ENCODE measurements at regions of chr13 and their contacts with region 1.

Region 1: GRCh38 chr13:110455941-110456340 is 105.6 kb downstream of the RAB20 start:
- DNase-seq: peak; percentile 84
- H3K4me3 Mint-ChIP-seq: peak overlapping the region; percentile 52
- H3K27ac Mint-ChIP-seq: no peak overlapping the region
- H3K4me1 Mint-ChIP-seq: peaks cover 4% of the 10 kb centered on the region
- H3K27me3 Mint-ChIP-seq: peaks cover 20% of the 10 kb centered on the region

Region 2: GRCh38 chr13:110250258-110250891 is 205.6 kb before region 1 on chr13:
- CTCF ChIA-PET with region 1: no interaction called
- intact Hi-C with region 1: no loop called
- DNase-seq: no peak
- H3K4me3 Mint-ChIP-seq: no peak overlapping the region
- H3K27ac Mint-ChIP-seq: no peak overlapping the region
- H3K4me1 Mint-ChIP-seq: no peaks in the 10 kb centered on the region
- H3K27me3 Mint-ChIP-seq: peaks cover 14% of the 10 kb centered on the region

Region 3: GRCh38 chr13:110396913-110397381 is 59.0 kb before region 1 on chr13:
- CTCF ChIA-PET with region 1: no interaction called
- intact Hi-C with region 1: no loop called
- DNase-seq: no peak
- H3K4me3 Mint-ChIP-seq: no peak overlapping the region
- H3K27ac Mint-ChIP-seq: no peak overlapping the region
- H3K4me1 Mint-ChIP-seq: no peaks in the 10 kb centered on the region
- H3K27me3 Mint-ChIP-seq: peaks cover 52% of the 10 kb centered on the region

Region 4: GRCh38 chr13:110444226-110444653 is 11.7 kb before region 1 on chr13:
- CTCF ChIA-PET with region 1: interaction called, 18 read pairs
- intact Hi-C with region 1: no loop called
- DNase-seq: peak; percentile 30
- H3K4me3 Mint-ChIP-seq: no peak overlapping the region
- H3K27ac Mint-ChIP-seq: no peak overlapping the region
- H3K4me1 Mint-ChIP-seq: no peaks in the 10 kb centered on the region
- H3K27me3 Mint-ChIP-seq: peaks cover 47% of the 10 kb centered on the region

Region 5: DNA sequence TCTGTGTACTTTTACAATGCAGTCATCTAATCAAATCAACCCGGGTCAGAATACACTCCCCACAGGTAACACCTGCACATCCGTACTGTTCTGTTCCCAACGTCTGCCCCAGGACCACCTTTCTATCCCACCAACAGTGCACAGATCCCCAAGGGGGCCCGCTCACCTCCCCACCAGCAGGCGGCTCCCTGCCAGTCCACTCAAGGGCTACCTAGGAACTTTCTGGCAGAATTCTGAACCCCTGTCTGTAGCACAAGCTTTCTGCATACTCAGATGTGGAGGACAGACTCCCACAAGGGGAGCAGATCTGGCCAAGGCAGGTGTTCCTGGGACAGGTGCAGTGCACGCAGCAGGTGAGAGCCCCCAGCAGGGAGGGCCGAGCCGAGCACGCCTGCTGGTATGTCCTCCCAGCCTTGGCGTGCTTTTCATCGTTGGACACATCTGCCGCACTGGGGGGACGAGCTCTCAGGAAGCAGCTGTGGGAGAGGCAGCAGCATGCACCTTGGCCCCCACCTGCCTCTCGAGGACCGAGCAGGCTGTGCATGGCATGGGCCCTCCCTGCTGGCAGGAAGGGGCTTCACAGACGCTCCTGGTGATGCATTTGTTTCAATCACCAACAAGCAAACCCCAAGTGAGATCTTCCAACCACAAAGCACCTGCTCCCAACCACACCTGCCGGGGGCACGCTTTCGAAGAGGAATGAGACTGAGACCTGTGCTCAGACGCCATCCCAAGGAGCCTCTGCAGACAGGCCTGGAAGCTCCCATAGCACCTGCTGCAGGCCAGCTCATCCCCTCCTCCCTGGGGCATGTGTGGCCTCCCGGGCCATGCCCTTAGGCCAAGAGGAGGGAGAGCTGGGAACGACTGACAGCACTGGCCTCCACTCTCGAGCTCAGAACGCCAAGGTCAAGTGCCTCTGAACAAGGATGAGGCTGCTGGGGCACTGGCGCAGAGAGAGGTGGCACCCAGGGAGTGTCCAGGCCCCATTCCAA is 69.7 kb after region 1 on chr13:
- CTCF ChIA-PET with region 1: interaction called, 6 read pairs
- intact Hi-C with region 1: loop called (anchors 5 kb)
- DNase-seq: peak; percentile 36
- H3K4me3 Mint-ChIP-seq: no peak overlapping the region
- H3K27ac Mint-ChIP-seq: no peak overlapping the region
- H3K4me1 Mint-ChIP-seq: peaks cover 26% of the 10 kb centered on the region
- H3K27me3 Mint-ChIP-seq: no peaks in the 10 kb centered on the region

Region 6: DNA sequence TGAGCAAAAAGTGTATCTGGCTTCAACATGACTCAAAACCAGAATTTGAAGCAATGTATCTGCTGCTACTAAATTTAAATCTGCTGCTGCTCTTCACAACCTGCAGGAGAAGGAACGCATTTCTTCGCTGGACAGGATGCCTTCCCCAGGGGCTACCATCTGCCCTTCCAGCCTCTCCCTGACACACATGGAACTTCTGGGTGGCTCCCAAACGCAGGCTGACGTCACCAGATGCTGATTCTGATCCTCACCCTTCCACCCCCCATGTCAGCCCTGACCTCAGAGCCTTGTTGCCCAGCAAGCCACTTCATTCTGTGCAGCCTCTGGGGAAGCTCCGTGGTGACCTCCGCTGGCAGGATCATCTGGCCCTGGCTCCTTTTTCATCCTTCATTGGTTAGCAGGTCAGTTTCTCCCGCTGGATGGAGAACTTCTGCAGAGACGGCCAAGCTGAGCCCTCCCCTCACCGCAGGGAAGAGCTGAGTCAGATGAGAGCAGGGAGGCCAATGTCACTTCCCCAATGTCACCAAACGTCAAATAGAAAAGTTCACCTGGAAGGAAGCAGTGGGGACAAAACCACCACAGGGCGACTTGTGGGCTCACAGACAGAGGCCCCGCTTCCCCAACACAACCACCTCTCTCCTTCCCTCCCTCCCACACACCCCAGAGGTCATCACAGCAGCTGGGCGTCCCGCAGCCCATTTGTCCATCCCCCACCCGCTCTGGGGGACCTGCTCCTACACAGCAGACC is 119.6 kb after region 1 on chr13:
- CTCF ChIA-PET with region 1: interaction called, 7 read pairs
- intact Hi-C with region 1: loop called (anchors 5 kb)
- DNase-seq: peak; percentile 12
- H3K4me3 Mint-ChIP-seq: no peak overlapping the region
- H3K27ac Mint-ChIP-seq: no peak overlapping the region
- H3K4me1 Mint-ChIP-seq: peaks cover 10% of the 10 kb centered on the region
- H3K27me3 Mint-ChIP-seq: peaks cover 30% of the 10 kb centered on the region

Region 7: DNA sequence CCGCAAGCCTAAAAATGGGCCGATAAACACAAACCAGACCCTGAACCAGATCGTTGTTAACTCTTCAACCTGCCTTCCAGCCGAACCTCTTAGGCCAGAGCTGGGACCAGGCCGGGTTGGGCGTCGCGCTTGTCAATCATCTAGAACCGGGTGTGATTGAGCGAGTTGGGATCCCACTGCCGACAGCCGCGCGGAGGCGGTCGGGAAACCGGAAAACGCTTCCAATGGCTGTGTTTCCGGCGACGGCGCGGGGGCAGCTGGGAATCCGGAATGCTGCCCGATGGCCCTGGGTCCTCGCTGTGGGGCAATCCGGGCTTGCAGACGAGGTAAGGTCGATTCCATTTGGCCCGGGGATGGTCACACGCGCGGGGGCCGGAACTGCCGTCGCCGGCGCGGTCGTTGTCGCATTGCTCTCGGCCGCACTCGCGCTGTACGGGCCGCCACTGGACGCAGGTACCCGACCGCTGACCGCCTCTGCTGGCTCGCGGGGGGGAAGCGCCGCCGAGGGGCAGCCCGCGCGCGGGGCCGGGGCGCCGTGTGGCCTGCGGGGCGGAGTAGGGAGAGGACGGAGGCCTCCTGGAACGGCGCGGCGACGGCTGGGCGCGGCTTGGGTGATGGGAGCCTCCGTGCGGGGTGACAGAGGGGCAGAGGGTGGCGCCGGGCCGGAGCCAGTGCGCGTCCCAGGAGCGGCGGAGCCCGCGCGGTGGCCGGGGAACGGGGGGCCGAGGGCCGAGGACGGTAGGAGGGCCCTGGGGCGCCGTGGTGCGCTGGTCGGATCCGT is 159.6 kb after region 1 on chr13 and contains the start of gene NAXD:
- CTCF ChIA-PET with region 1: interaction called, 10 read pairs
- intact Hi-C with region 1: loop called (anchors 10 kb)
- DNase-seq: peak; percentile 94
- H3K4me3 Mint-ChIP-seq: peak within 1 kb of the TSS; percentile 89
- H3K27ac Mint-ChIP-seq: peak within 1 kb of the TSS; percentile 89
- H3K4me1 Mint-ChIP-seq: peaks cover 40% of the 10 kb centered on the region
- H3K27me3 Mint-ChIP-seq: no peaks in the 10 kb centered on the region
- total RNA-seq, gene NAXD: 20.8 to 23.3 TPM